Left ventricle myocardium superior (tissue), 1 donor: ENCODE measurements at regions of chr17 and their contacts with region 1.

Region 1: DNA sequence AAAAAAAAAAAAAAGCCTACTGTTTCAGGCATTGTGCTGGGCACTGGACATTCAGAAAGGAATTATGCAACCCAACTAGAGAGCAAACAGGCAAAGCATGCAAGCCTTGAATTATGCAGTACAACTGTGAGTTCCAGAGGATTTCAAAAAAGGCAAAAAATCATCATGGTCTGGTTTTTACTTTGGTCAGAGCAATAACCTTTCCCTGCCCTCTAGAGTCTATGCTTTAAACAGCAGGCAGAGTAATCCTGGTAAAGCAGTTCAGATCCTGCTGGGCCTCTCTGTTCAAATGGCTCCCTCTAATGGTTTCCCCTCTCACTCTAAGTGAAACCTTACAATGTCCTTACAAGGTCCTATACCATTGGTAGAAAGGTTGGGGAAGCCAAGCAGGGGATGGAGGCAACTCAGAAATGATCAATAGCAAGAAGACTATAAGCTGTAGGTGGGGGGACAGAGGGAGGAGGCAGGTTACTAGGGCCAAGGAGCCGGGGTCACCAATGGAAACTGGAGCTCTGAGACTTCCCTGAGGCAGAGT is 4.6 kb upstream of the TAF15 start:
- DNase-seq: no peak
- ATAC-seq: peak; percentile 46

Region 2: DNA sequence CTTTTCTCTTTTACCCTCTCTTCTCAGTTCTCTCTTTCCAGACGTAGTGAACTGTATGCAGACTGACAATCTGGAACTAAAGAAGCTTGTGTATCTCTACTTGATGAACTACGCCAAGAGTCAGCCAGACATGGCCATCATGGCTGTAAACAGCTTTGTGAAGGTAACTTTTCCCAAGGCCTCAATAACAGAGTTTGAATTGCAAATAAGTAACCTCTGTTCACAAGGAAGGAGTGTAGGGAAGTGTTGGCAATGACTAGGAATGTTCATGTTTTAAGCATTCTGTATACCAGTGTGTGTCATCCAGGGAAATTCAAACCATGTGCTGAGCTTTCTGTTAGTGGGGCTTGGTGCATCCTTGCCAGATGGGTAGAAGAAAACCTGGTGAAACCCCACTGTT is 199.0 kb before region 1 on chr17:
- intact Hi-C with region 1: no loop called
- DNase-seq: no peak
- ATAC-seq: no peak

Region 3: DNA sequence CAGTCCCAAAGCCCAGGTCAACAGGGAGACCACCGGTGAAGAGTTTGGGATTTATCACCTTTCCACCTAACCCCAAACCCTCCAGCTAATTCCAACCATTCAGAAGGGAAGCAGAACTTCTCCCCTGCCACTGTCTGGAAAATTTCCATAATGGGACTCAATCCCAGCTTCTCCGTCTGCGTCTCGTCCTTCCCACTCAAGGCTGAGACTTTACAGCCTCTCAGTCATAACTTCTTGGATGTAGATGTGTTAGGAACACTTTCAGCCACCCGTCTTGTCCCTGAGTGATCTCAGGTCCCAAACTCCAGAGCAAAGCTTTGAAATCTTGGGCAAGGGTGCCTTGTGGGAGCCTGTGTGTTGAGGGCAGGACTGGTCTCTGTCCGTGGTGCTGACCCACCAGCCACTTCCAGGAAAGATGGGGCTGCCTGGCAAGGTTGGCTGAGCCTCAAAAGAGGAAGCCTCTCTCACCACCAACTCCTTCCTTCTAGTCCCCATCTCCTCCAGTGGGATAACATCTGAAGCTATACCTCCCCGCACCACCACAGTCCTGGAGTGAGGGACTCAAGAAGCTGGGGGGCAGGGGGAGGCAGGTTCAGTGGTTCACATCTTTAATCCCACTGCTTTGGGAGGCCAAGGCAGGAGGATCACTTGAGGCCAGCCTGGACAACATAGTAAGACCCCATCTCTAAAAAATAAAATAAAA is 60.9 kb before region 1 on chr17:
- intact Hi-C with region 1: no loop called
- DNase-seq: peak; percentile 55
- ATAC-seq: no peak

Region 4: GRCh38 chr17:35766903-35767510 is 37.7 kb before region 1 on chr17:
- intact Hi-C with region 1: loop called (anchors 1 kb)
- DNase-seq: no peak
- ATAC-seq: peak; percentile 21